AG04450 (cell line): ENCODE measurements at regions of chr1 and their contacts with region 1.

Region 1: DNA sequence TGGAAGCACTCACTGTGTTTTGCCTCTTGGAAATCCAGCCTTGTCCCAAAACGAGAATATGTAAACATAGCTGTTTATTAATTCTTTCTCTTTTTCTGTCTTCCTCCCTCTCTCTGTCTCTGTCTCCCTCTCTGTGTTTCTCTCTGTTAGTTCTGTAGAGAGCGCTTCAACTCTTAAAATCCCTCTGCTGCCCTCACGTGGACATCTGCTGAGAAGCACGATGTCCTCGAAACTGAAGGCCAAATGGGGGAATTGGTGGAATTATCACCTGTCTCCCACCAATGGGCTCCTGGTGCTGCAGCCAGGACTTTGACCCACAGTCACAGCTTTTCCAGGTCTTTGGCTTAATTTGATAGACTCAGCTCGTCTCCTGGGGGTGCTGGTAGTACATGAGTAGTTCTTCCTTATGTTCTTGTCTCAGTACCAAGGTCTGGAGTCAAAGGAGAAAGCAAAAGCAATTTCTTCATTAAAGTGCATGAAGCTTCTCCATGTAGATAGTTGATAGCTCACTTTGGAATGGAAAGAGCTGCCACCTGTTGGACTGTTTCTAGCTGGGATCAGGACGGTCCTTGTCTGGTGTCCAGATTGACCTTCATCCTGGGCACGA is 5.5 kb upstream of the GBP6 start:
- DNase-seq: peak; percentile 36
- H3K4me3 ChIP-seq: no peak overlapping the region
- H3K27ac ChIP-seq: no peak overlapping the region
- H3K27me3 ChIP-seq: no peaks in the 10 kb centered on the region
- CTCF ChIP-seq: peak; percentile 77

Region 2: DNA sequence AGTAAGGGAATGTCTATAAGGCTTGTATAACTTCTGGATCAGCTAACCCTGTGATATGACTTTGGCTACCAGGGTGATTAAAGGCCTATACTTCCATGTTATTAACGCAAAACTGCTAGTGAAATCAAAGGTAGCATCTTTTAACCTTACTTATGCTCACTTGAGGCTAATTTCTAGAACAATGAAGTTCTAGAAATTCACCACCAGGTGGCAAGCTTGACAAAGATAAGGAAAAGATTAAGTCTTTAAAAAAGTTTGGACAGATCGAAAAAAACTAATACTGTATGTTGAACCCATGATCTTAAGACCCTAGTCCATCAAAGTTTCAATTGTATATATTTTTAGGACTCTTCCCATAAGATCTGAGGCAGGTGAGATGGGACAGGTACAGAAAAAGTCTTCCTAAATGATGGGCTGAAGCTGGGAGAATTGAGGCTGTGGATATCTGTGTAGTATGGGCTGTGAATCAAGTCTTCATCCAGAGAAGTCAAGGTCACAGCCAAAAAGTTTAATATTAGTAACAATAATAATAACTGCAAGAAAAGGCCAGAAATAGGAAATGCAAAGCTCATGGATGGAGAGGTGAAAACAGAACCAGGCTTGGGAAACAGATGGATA is 384.8 kb before region 1 on chr1:
- CTCF ChIA-PET with region 1: interaction called, 16 read pairs
- POLR2A ChIA-PET with region 1: no interaction called
- DNase-seq: no peak
- H3K4me3 ChIP-seq: no peak overlapping the region
- H3K27ac ChIP-seq: no peak overlapping the region
- H3K27me3 ChIP-seq: no peaks in the 10 kb centered on the region
- CTCF ChIP-seq: peak; percentile 65

Region 3: GRCh38 chr1:88998716-88999115 is 359.7 kb before region 1 on chr1:
- CTCF ChIA-PET with region 1: interaction called, 74 read pairs
- POLR2A ChIA-PET with region 1: no interaction called
- DNase-seq: no peak
- H3K4me3 ChIP-seq: no peak overlapping the region
- H3K27ac ChIP-seq: no peak overlapping the region
- H3K27me3 ChIP-seq: no peaks in the 10 kb centered on the region
- CTCF ChIP-seq: peak; percentile 47

Region 4: GRCh38 chr1:89022167-89022959 is 336.0 kb before region 1 on chr1 and contains the start of gene GBP3:
- CTCF ChIA-PET with region 1: interaction called, 14 read pairs
- POLR2A ChIA-PET with region 1: no interaction called
- DNase-seq: peak; percentile 11
- H3K4me3 ChIP-seq: peak within 1 kb of the TSS; percentile 79
- H3K27ac ChIP-seq: peak within 1 kb of the TSS; percentile 83
- H3K27me3 ChIP-seq: no peaks in the 10 kb centered on the region
- CTCF ChIP-seq: no peak
- polyA plus RNA-seq, gene GBP3: 77.1 and 94.1 TPM in 2 replicates

Region 5: GRCh38 chr1:89310505-89310904 is 47.9 kb before region 1 on chr1:
- CTCF ChIA-PET with region 1: interaction called, 15 read pairs
- POLR2A ChIA-PET with region 1: no interaction called
- DNase-seq: no peak
- H3K4me3 ChIP-seq: no peak overlapping the region
- H3K27ac ChIP-seq: no peak overlapping the region
- H3K27me3 ChIP-seq: no peaks in the 10 kb centered on the region
- CTCF ChIP-seq: no peak

Region 6: DNA sequence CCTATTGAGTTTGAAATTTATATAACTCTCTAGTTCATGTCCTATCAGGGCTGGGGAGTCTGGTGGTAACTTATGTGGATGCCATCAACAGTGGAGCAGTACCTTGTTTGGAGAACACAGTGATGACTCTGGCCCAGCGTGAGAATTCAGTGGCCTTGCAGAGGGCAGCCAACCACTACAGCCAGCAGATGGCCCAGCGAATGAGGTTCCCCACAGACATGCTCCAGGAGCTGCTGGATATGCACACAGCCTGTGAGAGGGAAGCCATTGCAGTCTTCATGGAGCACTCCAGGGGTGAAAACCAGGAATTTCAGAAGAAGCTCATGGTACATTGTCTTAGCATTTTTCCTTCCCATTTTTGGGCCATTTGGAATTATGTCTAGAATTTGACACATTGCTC is 26.5 kb before region 1 on chr1:
- CTCF ChIA-PET with region 1: no interaction called
- POLR2A ChIA-PET with region 1: no interaction called
- DNase-seq: no peak
- H3K4me3 ChIP-seq: no peak overlapping the region
- H3K27ac ChIP-seq: no peak overlapping the region
- H3K27me3 ChIP-seq: no peaks in the 10 kb centered on the region
- CTCF ChIP-seq: no peak